ENCODE measurements at regions of chr6 and their contacts with region 1.

Region 1: DNA sequence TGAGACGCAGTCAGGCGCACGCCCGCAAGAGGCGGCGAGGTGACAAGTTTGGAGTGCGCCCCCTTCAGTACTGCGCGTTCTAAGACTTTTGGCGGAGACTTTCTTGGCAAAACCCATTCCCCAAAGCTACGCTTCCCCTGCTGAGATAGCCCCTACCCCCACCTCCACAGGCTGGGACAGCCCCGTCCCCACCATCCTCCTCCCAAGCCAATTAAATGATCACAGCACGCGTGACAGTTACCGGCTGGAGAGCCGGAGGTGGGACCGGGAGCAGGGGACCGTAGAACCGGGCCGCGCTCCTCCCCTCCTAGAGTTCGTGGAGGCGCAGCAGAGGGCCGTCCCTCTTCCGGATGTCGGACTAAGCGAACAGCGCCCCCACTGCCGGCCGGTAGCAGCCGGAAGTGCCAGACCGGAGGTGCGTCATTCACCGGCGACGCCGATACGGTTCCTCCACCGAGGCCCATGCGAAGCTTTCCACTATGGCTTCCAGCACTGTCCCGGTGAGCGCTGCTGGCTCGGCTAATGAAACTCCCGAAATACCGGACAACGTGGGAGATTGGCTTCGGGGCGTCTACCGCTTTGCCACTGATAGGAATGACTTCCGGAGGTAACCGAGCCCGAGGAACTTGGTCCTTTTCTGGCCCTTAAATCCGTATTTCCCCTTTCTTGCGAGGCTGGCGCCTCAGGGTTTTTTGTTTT is at the start of gene TOMM6:
- DNase-seq: peak; percentile 94
- ATAC-seq: peak; percentile 83
- H3K4me3 Mint-ChIP-seq: peak within 1 kb of the TSS; percentile 96
- H3K27ac Mint-ChIP-seq: peak within 1 kb of the TSS; percentile 97
- H3K4me1 Mint-ChIP-seq: peaks cover 7% of the 10 kb centered on the region
- H3K27me3 Mint-ChIP-seq: peaks cover 5% of the 10 kb centered on the region
- total RNA-seq, gene TOMM6: 157 to 163 TPM

Region 2: GRCh38 chr6:41581381-41581991 is 205.9 kb before region 1 on chr6:
- POLR2A ChIA-PET with region 1: no interaction called
- DNase-seq: no peak
- ATAC-seq: no peak
- H3K4me3 Mint-ChIP-seq: no peak overlapping the region
- H3K27ac Mint-ChIP-seq: no peak overlapping the region
- H3K4me1 Mint-ChIP-seq: peaks cover 2% of the 10 kb centered on the region
- H3K27me3 Mint-ChIP-seq: no peaks in the 10 kb centered on the region

Region 3: GRCh38 chr6:41735427-41736356 is 51.7 kb before region 1 on chr6 and contains the start of gene TFEB:
- POLR2A ChIA-PET with region 1: interaction called, 19 read pairs
- DNase-seq: peak; percentile 98
- ATAC-seq: peak; percentile 60
- H3K4me3 Mint-ChIP-seq: peak within 1 kb of the TSS; percentile 78
- H3K27ac Mint-ChIP-seq: peak within 1 kb of the TSS; percentile 75
- H3K4me1 Mint-ChIP-seq: peaks cover 24% of the 10 kb centered on the region
- H3K27me3 Mint-ChIP-seq: no peaks in the 10 kb centered on the region
- total RNA-seq, gene TFEB: 17.6 TPM

Region 4: GRCh38 chr6:42043787-42044475 is 256.6 kb after region 1 on chr6:
- POLR2A ChIA-PET with region 1: interaction called, 73 read pairs
- DNase-seq: peak; percentile 95
- ATAC-seq: peak; percentile 38
- H3K4me3 Mint-ChIP-seq: peak overlapping the region; percentile 86
- H3K27ac Mint-ChIP-seq: peak overlapping the region; percentile 94
- H3K4me1 Mint-ChIP-seq: peaks cover 79% of the 10 kb centered on the region
- H3K27me3 Mint-ChIP-seq: no peaks in the 10 kb centered on the region

Region 5: GRCh38 chr6:42050266-42051032 is 263.1 kb after region 1 on chr6 and contains the start of gene TAF8:
- POLR2A ChIA-PET with region 1: interaction called, 73 read pairs
- DNase-seq: peak; percentile 92
- ATAC-seq: peak; percentile 75
- H3K4me3 Mint-ChIP-seq: peak within 1 kb of the TSS; percentile 97
- H3K27ac Mint-ChIP-seq: peak within 1 kb of the TSS; percentile 99
- H3K4me1 Mint-ChIP-seq: peaks cover 55% of the 10 kb centered on the region
- H3K27me3 Mint-ChIP-seq: no peaks in the 10 kb centered on the region
- total RNA-seq, gene TAF8: 46.2 to 50.4 TPM

Measured in activated naive CD8-positive, alpha-beta T cell treated with anti-CD3 and anti-CD28 coated beads, Interleukin-2, amount 10 ng/mL, durations not matched to agents 7 days and 5 days (primary cell).